ENCODE measurements at regions of chr16 and their contacts with region 1.

Region 1: GRCh38 chr16:21060027-21060510 is 90.6 kb downstream of the DNAH3 start:
- DNase-seq: no peak
- ATAC-seq: no peak
- H3K4me3 ChIP-seq: no peak overlapping the region
- H3K27ac ChIP-seq: no peak overlapping the region
- H3K4me1 ChIP-seq: no peaks in the 10 kb centered on the region
- H3K27me3 ChIP-seq: peaks cover 5% of the 10 kb centered on the region
- CTCF ChIP-seq: no peak
- POLR2A ChIP-seq: no peak
- RAD21 ChIP-seq: no peak

Region 2: DNA sequence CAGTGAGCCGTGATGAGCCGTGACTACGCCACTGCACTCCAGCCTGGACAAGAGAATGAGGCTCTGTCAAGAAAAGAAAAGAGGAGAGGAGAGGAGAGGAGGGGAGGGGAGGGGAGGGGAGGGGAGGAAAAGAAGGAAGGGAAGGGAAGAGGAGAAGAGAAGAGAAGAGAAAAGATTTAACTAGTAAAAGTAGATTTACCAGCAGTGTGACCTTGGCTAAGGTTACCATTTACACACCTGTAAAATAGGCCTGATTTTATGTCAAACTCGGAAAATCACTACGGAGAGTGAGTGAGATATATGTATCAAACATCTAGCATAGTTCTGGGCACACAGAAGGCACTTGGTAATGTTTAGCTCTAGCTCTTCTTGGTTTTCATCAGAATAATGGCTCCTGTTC is 50.3 kb before region 1 on chr16:
- CTCF ChIA-PET with region 1: no interaction called
- POLR2A ChIA-PET with region 1: no interaction called
- dilution Hi-C with region 1: no loop called
- in situ Hi-C with region 1: loop called (anchors 5 kb)
- intact Hi-C with region 1: no loop called
- DNase-seq: no peak
- ATAC-seq: no peak
- H3K4me3 ChIP-seq: no peak overlapping the region
- H3K27ac ChIP-seq: no peak overlapping the region
- H3K4me1 ChIP-seq: no peaks in the 10 kb centered on the region
- H3K27me3 ChIP-seq: no peaks in the 10 kb centered on the region; the same call in none of the 2 replicates
- CTCF ChIP-seq: no peak
- POLR2A ChIP-seq: no peak
- RAD21 ChIP-seq: no peak

Region 3: GRCh38 chr16:21023509-21024202 is 36.4 kb before region 1 on chr16:
- CTCF ChIA-PET with region 1: no interaction called
- POLR2A ChIA-PET with region 1: no interaction called
- dilution Hi-C with region 1: no loop called
- in situ Hi-C with region 1: no loop called
- intact Hi-C with region 1: no loop called
- DNase-seq: no peak
- ATAC-seq: no peak
- H3K4me3 ChIP-seq: no peak overlapping the region
- H3K27ac ChIP-seq: no peak overlapping the region
- H3K4me1 ChIP-seq: no peaks in the 10 kb centered on the region
- H3K27me3 ChIP-seq: no peaks in the 10 kb centered on the region
- CTCF ChIP-seq: no peak
- POLR2A ChIP-seq: no peak
- RAD21 ChIP-seq: no peak

Region 4: DNA sequence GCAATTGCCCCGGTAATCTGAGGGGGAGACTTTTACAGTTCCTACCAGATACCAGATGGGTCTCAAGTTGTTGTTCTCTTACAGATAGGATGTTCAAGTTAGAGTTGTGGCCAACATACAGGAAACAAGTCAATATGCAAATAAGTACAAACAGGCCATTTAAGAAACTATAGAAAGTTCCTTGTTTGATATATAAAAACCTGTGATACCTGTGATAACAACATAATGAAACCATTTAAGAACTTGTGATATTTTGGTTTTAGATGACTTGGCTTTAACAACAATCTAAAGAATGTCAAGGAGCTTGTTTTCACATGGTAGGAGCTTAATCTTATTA is 1297.5 kb after region 1 on chr16:
- CTCF ChIA-PET with region 1: no interaction called
- POLR2A ChIA-PET with region 1: no interaction called
- dilution Hi-C with region 1: no loop called
- in situ Hi-C with region 1: no loop called
- intact Hi-C with region 1: no loop called
- DNase-seq: no peak
- ATAC-seq: no peak
- H3K4me3 ChIP-seq: no peak overlapping the region
- H3K27ac ChIP-seq: no peak overlapping the region; the same call in 1 of the 2 replicates
- H3K4me1 ChIP-seq: peaks cover 15% of the 10 kb centered on the region
- H3K27me3 ChIP-seq: no peaks in the 10 kb centered on the region
- CTCF ChIP-seq: no peak
- POLR2A ChIP-seq: no peak
- RAD21 ChIP-seq: no peak

Measured in IMR-90 (cell line).